ENCODE measurements at regions of chr9 and their contacts with region 1.

Region 1: DNA sequence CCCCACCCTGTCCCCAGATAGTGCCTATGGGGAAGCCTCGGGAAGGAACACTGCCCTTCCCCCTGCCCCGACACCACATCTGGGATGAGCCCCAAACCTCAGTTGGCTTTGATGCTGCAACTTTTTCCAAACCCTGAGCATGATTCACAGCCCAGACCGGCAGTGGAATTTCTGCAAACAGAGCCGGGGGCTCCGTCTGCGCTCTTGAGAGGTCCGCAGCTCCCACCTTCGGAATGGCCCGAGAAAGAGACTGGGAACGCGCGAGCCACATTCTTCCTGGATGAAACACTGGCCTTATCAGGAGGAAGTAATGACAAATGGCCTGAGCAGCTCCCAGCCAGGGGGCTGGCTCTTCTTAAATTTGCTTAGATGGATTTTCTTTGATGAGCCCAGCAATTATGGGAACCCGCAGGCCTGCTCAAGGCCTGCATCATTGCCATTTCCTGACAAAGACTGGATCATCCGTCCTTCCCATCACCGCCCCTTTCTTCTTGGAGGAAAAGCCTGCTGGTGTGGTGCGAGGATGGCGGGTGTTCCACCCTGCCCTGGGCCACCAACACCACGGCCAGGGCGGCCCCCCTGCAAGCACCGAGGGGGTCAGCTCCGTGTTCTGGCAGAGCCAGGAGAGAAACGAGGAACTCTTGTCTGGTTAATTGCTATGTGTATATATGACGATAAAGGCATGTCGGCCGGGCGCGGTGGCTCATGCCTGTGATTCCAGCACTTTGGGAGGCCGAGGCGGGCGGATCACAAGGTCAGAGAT is 38.9 kb upstream of the COL5A1 start:
- DNase-seq: peak; percentile 84
- H3K4me3 ChIP-seq: no peak overlapping the region
- H3K27ac ChIP-seq: peak overlapping the region; percentile 97
- H3K4me1 ChIP-seq: peaks cover 19% of the 10 kb centered on the region
- H3K27me3 ChIP-seq: no peaks in the 10 kb centered on the region
- CTCF ChIP-seq: no peak
- POLR2A ChIP-seq: peak; percentile 17

Region 2: GRCh38 chr9:134253606-134254198 is 349.0 kb before region 1 on chr9:
- CTCF ChIA-PET with region 1: no interaction called
- POLR2A ChIA-PET with region 1: no interaction called
- dilution Hi-C with region 1: no loop called
- intact Hi-C with region 1: no loop called
- DNase-seq: no peak
- H3K4me3 ChIP-seq: no peak overlapping the region
- H3K27ac ChIP-seq: no peak overlapping the region
- H3K4me1 ChIP-seq: no peaks in the 10 kb centered on the region
- H3K27me3 ChIP-seq: peaks cover 0 to 2% of the 10 kb centered on the region in 2 experiments
- CTCF ChIP-seq: no peak
- POLR2A ChIP-seq: no peak

Region 3: DNA sequence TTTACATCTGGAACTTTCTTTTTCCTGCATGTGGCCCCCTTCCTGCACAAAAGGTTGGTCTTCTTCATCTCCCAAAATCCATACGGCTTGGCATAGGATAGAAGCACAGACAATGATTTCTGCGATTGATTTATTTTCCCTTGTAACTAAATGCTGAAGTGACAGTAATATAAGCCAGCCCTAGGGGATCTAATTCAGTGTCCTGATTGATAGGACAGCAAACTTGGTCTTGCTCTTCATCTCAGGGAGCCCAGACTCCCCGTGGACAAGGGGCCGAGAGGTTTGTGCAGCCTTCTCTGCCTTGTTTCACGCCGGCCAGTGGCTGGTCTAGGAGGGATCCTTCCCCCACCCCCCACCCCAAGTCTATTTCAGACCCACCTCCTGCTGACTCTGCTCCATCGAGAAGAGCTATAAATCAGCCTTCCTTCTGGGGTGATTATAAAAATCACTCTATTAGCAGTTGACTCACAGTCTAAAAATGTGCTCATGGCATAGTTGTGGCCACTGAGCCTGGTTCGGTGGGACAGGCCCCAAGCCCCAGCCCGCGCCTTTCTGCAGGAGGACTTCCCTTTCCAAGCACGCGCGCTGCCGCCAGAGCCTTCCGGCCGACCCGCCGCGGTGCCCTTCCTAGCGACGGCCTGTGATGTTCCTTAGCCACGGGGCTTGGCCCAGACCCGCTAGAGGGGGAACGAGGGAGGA is 50.9 kb before region 1 on chr9:
- CTCF ChIA-PET with region 1: interaction called, 3 read pairs
- POLR2A ChIA-PET with region 1: no interaction called
- dilution Hi-C with region 1: no loop called
- intact Hi-C with region 1: loop called (anchors 1 kb)
- DNase-seq: peak; percentile 73
- H3K4me3 ChIP-seq: no peak overlapping the region
- H3K27ac ChIP-seq: peak overlapping the region; percentile 91
- H3K4me1 ChIP-seq: peaks cover 21% of the 10 kb centered on the region
- H3K27me3 ChIP-seq: no peaks in the 10 kb centered on the region
- CTCF ChIP-seq: no peak
- POLR2A ChIP-seq: no peak

Region 4: DNA sequence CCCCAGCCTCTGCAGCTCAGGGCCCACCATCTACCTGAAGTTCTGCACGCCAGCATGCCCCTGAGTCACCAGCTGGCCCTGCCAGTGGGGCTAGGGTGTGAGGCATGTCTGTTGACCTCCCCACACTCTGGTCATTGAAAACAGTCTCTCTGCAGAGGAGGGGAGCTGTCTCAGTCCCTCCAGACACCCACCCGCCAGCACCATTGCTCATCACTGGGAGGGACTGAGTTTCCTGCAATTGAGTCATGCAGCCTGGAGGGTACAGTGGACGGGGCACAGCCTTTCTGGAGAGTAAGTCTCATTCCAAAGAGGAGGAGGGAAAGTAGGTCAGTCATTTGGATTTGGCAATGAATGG is 22.1 kb after region 1 on chr9:
- CTCF ChIA-PET with region 1: interaction called, 5 read pairs
- POLR2A ChIA-PET with region 1: no interaction called
- dilution Hi-C with region 1: no loop called
- intact Hi-C with region 1: loop called (anchors 1 kb)
- DNase-seq: peak; percentile 42
- H3K4me3 ChIP-seq: no peak overlapping the region
- H3K27ac ChIP-seq: peak overlapping the region; percentile 60
- H3K4me1 ChIP-seq: peaks cover 29% of the 10 kb centered on the region
- H3K27me3 ChIP-seq: no peaks in the 10 kb centered on the region
- CTCF ChIP-seq: no peak
- POLR2A ChIP-seq: peak; percentile 31

Measured in endothelial cell of umbilical vein (primary cell).